Sciatic nerve (tissue), 2 donors: ENCODE measurements at regions of chr15 and their contacts with region 1.

Region 1: DNA sequence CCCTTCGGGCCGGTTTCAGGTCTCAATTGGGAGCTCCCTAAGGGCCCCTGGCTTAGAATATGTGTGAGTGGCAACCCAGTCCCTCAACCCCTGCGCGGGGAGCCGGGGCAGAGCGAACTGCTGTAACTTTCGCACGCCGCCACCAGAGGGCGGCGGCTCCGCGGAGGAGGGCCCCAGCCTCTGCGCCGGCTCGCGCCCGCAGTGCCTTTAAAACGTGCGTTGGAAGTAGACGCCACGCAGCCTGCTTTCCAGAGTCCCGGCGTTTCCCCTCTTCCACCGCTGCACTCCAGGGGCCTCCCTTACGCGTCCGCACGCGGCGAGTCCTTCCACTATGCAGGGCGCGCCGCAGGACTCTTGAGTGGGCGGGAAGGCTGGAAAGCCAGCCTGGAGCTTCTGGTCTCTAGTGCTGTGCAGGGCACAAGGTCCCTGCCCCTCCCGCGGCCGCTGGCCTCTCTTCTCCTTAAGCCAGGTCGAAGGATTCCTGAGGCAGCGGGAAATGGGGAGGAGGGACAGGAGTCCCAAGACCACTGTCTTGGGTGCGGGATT is 23.7 kb upstream of the RNU6-1 start:
- DNase-seq: peak; percentile 87
- ATAC-seq: peak; percentile 97

Region 2: DNA sequence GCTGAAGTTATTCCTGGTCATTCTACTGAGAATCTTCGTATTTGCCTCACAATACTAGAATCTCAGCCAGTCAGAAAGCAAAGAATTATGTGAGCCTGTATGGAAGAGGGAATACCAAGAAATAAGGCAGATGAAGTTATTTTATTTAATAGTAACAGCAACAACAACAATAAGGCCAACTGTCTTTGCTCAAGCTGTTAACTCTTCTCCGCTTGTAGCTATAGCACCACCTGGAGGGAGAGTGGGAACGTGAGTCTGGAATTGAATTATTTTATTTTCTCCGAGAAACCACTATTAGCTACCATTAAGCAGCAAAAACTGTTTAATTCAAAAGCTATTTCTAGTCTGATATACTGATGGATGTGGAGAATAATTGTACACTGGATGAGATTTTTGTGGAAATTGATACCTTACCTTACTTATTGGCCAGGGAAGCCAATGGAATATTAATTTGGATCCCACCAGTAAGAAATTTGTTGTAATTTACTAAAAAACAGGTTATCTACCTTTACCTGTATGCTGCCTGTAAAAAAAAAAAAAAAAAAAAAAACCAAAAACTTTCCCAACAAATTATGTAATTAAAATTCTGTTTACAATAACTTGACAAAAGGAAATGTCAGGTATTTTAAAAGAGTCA is 291.5 kb after region 1 on chr15:
- intact Hi-C with region 1: loop called (anchors 5 kb)
- DNase-seq: no peak
- ATAC-seq: peak; percentile 83

Region 3: DNA sequence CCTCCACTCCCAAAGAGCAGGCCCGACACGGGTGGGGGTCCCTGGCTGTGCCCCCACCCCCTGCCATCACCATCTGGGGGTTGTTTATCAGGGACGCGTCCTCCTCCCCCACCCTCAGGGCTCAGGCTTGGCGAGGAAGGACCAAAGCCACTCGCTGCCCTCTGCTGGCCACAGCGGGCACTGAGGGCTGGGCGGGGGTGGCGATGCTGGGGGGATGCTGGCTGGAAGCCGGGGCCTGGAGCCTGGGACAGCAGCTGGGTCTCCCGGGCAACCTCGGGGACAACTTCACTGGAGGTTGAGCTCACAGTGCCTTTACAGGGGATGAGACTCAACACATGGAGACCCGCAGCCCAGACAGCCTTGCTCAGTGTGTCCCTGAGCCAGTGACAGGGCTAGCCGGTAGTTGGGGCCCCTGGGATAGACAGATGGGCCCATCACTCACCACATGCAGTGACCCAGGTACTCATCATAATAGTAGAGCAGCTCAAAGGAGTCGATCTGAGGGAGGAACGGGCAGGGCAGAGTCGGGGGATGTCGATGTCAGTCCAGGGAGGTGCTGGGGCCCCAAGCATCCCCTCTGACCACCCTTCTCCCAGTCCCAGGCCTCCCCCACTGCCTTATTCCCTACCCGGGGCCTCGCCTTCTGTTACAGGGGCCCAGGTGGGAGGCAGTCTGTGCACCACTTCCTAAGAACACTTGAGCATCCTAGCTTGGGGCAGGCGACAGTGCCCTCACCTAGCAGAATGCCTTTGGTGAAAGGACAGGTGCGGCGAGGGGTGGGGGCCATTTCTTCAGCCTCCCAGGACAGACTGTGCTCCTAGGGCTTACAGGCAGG is 347.5 kb after region 1 on chr15:
- intact Hi-C with region 1: no loop called
- DNase-seq: peak; percentile 85
- ATAC-seq: peak; percentile 79